ENCODE measurements at regions of chr15 and their contacts with region 1.

Region 1: DNA sequence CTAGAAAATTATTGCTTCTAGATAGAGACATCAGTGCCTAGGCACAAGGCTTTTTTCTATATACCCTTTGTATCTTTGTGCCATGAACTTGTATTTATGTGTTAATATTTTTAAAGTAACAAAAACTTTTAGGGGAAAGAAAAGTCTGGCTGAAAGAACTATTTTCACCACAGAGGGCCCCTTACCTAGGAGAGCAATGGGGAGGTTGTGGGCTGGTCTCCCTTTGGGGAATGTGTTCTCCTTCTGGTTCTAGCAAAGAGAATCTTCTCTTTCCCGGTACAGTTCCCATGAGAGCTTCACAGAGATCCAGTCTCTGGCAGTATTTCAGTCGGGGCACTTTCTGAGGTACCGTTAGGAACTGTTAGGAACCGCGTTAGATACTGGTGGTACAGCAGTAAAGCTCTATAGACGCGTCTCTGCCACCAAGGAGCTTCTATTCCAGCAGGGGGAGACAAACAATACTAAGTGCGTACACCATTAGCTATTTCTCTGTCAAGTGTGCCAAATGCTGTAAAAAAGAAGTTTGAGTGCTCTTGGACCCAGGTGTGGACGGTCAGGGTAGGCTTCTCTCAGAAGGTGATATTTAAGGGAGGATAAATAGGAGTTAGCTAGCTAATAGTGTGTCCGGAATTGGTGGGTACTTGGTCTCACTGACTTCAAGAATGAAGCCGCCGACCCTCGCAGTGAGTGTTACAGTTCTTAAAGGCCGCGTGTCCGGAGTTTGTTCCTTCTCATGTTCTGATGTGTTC is 4.6 kb upstream of the EPB42 start:
- DNase-seq: peak; percentile 78
- ATAC-seq: peak; percentile 99
- H3K4me3 Mint-ChIP-seq: no peak overlapping the region
- H3K27ac Mint-ChIP-seq: no peak overlapping the region
- H3K4me1 Mint-ChIP-seq: peaks cover 6% of the 10 kb centered on the region
- H3K27me3 Mint-ChIP-seq: peaks cover 20% of the 10 kb centered on the region

Region 2: GRCh38 chr15:42707068-42707467 is 518.3 kb before region 1 on chr15:
- CTCF ChIA-PET with region 1: no interaction called
- POLR2A ChIA-PET with region 1: no interaction called
- DNase-seq: no peak
- ATAC-seq: no peak
- H3K4me3 Mint-ChIP-seq: no peak overlapping the region
- H3K27ac Mint-ChIP-seq: no peak overlapping the region
- H3K4me1 Mint-ChIP-seq: peaks cover 5% of the 10 kb centered on the region
- H3K27me3 Mint-ChIP-seq: no peaks in the 10 kb centered on the region

Region 3: DNA sequence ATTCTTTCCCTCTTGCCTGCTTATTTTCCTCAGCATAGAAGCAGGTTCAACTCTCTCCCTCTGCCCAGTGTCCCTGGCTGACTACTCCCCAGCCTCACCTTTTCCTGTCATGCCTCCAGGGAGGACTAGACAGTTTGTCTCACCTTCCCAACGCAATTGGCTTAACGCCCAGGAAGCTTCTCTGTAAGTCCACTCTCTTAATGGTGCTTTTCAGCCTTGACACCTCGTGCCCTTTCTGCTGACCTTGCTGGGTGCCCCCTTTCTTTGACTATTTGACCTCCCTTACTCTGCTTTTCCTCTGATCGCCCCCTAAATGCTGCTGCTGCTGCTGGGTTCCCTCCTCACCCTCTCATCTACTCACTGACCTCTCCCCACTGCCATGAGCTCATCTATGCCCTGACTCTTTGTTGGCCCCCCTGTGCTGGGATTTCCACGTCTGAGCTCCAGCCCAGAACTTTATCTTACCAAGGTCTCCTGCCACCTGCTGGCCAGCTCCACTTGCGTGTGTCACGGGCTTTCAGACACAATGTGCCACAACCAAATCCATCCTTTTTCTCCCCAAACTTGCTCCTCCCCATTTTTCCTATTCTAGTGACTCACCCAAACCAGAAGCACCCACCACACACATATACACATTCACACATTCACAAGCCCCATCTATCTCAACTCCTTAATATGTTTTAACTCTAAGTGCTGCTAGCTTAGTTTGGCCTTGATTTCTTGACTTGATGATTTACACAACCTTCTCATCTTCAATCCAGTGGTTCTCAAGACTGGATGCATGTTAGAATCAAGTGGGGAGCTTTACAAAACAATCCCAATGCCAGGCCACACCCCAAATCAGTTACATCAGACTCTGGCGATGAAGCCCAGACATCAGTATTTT is 21.1 kb before region 1 on chr15:
- CTCF ChIA-PET with region 1: interaction called, 39 read pairs
- POLR2A ChIA-PET with region 1: interaction called, 3 read pairs
- DNase-seq: peak; percentile 73
- ATAC-seq: peak; percentile 75
- H3K4me3 Mint-ChIP-seq: no peak overlapping the region
- H3K27ac Mint-ChIP-seq: no peak overlapping the region
- H3K4me1 Mint-ChIP-seq: peaks cover 17% of the 10 kb centered on the region
- H3K27me3 Mint-ChIP-seq: peaks cover 15% of the 10 kb centered on the region

Region 4: GRCh38 chr15:43241100-43241499 is 15.7 kb after region 1 on chr15:
- CTCF ChIA-PET with region 1: interaction called, 24 read pairs
- POLR2A ChIA-PET with region 1: no interaction called
- DNase-seq: no peak
- ATAC-seq: no peak
- H3K4me3 Mint-ChIP-seq: no peak overlapping the region
- H3K27ac Mint-ChIP-seq: no peak overlapping the region
- H3K4me1 Mint-ChIP-seq: peaks cover 55% of the 10 kb centered on the region
- H3K27me3 Mint-ChIP-seq: no peaks in the 10 kb centered on the region

Region 5: DNA sequence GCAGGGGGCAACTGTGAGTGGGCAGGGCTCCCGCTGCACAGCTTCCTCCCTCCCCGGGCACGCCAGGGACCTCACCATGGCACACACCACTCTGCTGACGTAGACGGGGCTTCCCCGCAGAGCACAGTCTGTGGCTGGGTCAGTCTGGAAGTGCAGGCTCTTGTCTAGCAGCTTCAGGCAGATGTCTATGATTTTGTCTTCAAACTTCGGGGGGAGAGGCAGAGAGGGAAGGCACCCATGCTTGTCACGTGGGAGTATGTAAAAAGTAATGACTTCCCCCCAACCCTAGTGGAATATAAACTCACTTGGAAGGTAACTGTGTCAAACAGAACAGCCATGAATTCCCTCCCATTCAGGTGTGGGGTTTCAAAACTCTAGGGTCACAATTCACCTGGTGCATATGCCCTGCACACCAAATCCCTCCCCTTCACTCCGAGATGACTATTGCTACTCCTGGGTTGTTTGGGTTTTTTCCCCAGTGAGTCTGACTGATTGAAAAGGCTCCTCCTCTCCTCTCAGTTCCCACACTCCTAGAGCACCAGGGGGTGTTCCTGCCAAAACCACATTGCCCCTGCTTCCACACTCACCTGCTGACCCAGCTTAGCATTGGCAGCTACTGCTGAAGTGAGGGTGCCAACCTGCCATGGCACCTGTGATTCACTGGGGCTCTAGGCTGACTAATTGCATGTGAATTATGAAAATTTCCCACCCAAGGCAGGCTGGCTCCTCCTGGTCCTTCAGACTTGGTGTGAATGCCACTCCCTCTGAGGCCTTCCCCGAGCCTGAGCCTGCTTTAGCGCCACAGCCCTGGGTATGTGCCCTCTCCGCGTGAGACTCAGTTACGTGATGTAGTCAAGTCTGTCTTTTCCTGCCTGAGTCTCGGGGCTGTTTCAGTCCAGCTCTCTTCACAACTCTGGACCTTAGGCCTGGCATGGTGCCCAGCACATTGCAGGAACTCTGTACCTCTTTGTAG is 28.3 kb after region 1 on chr15:
- CTCF ChIA-PET with region 1: interaction called, 26 read pairs
- POLR2A ChIA-PET with region 1: no interaction called
- DNase-seq: peak; percentile 57
- ATAC-seq: peak; percentile 74
- H3K4me3 Mint-ChIP-seq: no peak overlapping the region
- H3K27ac Mint-ChIP-seq: no peak overlapping the region
- H3K4me1 Mint-ChIP-seq: peaks cover 56% of the 10 kb centered on the region
- H3K27me3 Mint-ChIP-seq: peaks cover 4% of the 10 kb centered on the region

Region 6: DNA sequence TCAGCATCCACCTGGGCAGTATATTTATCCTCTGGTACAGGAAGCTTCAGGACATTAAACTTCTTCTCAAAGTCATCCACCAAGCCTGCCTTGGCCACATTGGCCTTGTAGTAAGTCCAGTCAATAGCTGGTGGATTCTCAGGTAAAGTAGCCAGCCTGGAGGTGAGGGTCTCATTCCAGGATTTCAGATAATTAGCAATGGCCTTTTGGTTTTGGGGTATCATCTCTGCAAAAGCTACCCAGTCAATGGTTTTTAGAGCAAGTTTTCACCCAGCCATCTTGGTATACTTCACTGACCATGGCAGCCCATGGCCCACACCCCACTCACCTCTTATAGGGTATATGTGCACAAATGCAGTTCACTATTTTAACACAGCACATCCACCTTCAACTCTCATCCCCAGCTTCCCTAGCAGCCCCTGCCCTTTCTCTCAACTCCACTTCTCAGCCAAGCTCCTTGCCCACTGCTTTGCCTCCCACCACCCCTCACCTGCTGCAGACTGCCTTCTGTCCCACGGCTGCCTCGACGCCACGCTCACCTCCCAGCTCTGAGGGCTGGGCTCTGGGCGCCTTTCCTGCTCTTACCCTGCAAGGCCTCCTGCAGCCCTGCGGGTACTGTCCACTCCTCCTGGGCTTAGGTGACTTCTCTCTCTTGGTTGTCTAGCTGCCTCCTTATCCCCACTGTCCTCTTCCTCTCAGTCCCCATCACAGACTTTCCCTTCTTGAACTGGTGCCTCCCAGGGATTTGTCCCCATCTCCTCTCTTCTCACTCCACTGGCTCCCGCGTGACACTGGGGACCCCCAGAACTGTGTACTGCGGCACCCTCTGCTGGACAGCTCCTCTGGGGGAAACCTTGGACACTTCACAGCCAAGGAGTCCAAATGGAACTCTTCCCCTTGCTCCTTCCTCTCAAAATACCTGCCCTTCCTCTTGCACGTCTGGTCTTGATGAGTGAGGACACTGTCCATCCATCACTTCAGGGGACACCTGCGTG is 43.0 kb after region 1 on chr15:
- CTCF ChIA-PET with region 1: interaction called, 155 read pairs
- POLR2A ChIA-PET with region 1: interaction called, 3 read pairs
- DNase-seq: peak; percentile 63
- ATAC-seq: peak; percentile 59
- H3K4me3 Mint-ChIP-seq: no peak overlapping the region
- H3K27ac Mint-ChIP-seq: no peak overlapping the region
- H3K4me1 Mint-ChIP-seq: peaks cover 22% of the 10 kb centered on the region
- H3K27me3 Mint-ChIP-seq: peaks cover 28% of the 10 kb centered on the region

Region 7: GRCh38 chr15:43275740-43276562 is 50.6 kb after region 1 on chr15:
- CTCF ChIA-PET with region 1: interaction called, 155 read pairs
- POLR2A ChIA-PET with region 1: no interaction called
- DNase-seq: no peak
- ATAC-seq: no peak
- H3K4me3 Mint-ChIP-seq: no peak overlapping the region
- H3K27ac Mint-ChIP-seq: no peak overlapping the region
- H3K4me1 Mint-ChIP-seq: peaks cover 6% of the 10 kb centered on the region
- H3K27me3 Mint-ChIP-seq: peaks cover 6% of the 10 kb centered on the region

Region 8: DNA sequence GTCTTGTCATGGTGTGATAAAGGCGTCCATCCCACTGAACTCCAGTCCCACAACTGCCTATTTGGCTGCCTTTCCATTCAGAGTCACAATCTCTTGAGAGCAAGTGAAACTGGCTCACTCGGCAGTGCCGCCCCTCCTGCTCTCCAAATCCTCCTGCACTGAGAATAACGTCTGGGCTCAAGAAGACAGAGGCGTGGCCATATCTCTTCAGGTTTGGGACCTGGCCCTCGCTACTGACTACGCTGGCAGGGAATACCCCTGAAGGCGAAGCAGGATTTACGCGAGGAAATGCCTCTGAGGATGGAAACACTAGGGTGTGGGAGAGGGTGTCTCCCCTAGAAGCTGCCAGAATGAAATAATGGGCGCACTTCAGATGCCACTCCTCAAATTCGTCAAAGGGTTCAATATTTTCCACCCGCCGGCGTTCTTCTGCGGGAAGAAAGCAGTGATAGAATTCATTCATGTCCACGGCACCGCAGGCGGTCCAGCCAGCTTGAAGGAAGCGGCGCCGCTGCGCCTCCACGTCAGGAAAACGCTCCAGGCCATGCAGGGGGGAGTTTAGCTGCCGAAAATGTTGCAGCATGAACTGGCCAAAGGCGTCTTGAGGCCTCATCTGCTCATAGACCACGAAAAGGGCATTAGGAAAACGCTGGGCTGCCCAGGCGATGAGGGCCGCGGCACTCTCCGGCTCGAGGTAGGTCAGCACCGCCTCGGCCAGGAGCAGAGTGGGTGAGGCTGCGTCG is 104.0 kb after region 1 on chr15:
- CTCF ChIA-PET with region 1: interaction called, 13 read pairs
- POLR2A ChIA-PET with region 1: no interaction called
- DNase-seq: no peak
- ATAC-seq: no peak
- H3K4me3 Mint-ChIP-seq: peak overlapping the region; percentile 97
- H3K27ac Mint-ChIP-seq: peak overlapping the region; percentile 100
- H3K4me1 Mint-ChIP-seq: peaks cover 40% of the 10 kb centered on the region
- H3K27me3 Mint-ChIP-seq: no peaks in the 10 kb centered on the region

Measured in activated CD8-positive, alpha-beta T cell treated with anti-CD3 and anti-CD28 coated beads, Interleukin-2, amount 10 ng/mL, durations not matched to agents 7 days and 5 days (primary cell).